Head of caudate nucleus (tissue), 42 donors: ENCODE measurements at regions of chr10 and their contacts with region 1.

Region 1: GRCh38 chr10:78924319-78925003 is 144.3 kb upstream of the ZMIZ1 start:
- DNase-seq: no peak

Region 2: DNA sequence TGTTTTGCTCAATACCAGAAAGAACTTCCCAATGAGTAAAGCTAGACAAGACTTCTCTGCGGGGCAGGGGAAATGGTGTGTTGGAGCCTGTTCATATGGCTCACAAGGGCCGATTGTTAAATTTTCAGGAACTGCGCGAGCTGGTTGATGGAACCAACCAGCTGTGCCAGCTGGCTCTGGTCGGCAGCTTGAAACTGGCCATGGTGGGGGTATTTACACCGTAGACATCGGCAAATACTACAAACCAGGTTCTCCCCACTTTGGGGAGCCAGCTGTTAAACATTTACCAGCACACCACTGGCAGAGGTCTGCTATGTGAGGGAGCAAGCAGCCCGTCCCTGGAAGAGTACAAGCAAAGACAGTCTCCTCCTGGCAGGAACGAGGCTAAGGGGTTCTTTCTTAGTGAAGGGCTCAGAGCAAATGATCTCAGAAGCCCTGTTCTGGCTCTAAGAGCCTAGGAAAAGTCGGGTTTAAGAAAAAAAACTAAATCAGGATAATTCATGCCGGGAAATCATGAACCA is 135.5 kb after region 1 on chr10:
- intact Hi-C with region 1: loop called (anchors 5 kb)
- DNase-seq: peak; percentile 43 to 92 (median 74)